ENCODE measurements at regions of chr3 and their contacts with region 1.

Region 1: GRCh38 chr3:143775459-143775858 is 72.8 kb downstream of the SLC9A9 start:
- DNase-seq: no peak
- H3K4me3 ChIP-seq: no peak overlapping the region
- H3K27ac ChIP-seq: no peak overlapping the region
- H3K4me1 ChIP-seq: peaks cover 0 to 7% (median under 1%) of the 10 kb centered on the region in 4 donors
- H3K27me3 ChIP-seq: no peaks in the 10 kb centered on the region
- CTCF ChIP-seq: peak in 4 of 5 experiments; percentile 31 to 48 (median 46)
- EP300 ChIP-seq: no peak
- POLR2A ChIP-seq: no peak

Region 2: DNA sequence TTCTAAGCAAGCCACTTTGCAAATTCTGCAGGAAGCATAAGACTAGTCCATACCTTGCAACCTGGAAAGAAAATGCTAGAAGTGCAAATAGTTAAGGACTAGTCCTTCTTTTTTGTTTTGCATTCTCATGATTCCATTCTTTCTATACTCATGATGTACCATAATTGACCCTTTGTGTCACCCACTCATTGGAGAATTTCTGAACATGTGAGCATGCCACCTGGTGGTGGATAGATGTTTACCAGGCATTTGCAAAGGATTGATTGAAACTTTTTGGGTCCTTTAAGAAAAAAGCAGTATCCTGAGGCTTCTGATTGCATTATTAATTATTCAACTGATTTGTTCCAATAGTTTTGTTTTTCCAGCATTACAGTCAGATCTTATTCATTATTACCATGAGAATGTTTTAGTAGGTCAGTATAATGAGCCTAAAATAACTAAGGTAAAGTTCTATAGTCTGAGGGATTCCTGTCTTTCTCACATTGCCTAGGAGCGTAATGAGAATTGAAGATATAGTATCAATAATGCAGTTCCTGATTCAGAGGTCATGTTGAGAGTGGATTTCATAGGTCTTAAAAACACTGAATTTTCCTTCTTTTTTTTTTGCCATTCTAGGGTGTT is 176.0 kb after region 1 on chr3:
- in situ Hi-C with region 1: loop called in 2 of 4 experiments (anchors 10 to 25 kb)
- intact Hi-C with region 1: no loop called
- DNase-seq: no peak
- H3K4me3 ChIP-seq: no peak overlapping the region
- H3K27ac ChIP-seq: no peak overlapping the region
- H3K4me1 ChIP-seq: no peaks in the 10 kb centered on the region
- H3K27me3 ChIP-seq: no peaks in the 10 kb centered on the region
- CTCF ChIP-seq: peak; percentile 43 to 68 (median 56)
- EP300 ChIP-seq: no peak
- POLR2A ChIP-seq: no peak